ENCODE measurements at regions of chr4 and their contacts with region 1.

Region 1: DNA sequence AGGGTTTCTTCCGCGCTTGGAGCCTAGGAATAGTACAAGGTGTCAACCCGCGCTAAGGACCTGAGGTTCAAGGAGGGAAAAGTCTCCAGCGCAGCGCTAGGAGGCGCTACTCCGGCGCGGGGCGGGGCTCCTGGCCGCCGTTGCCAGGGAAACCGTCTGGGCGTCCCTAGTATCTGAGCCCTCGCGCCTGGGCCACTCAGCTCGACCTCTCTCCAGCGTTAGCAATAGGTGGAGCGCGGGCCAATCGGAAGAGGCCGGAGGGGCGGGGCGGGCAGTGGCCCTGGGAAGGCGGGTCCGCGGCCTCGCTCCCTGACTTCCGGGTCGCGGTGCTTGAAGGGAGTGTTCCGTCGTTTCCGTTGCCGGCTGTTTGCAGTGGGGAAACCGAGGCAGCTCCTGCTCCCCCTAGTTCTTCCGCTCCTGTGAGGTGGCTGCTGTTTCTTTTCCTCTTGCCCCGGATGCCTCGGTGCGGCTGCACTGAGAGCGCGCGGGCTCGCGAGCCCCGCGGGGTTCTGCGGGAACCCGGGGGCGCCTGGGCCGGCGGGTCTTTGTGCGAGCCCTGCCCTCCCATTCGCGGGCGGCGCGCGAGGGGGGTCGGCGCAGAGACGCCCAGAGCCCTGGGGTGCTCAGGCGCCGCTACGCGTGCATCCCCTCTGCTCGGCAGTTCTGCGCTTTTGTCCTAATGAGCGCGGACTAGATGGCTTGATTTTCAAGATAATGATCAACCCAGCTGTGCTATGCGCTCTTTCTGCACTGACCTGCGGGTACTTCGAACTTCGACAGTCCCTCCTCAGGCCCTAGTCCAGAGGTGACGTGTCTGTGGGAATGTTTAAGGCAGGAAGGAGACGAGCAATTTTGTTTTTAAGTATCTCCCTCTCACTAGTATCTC is at the start of gene ELMOD2:
- DNase-seq: peak; percentile 97
- H3K4me3 Mint-ChIP-seq: peak within 1 kb of the TSS; percentile 85
- H3K27ac Mint-ChIP-seq: peak within 1 kb of the TSS; percentile 49
- H3K4me1 Mint-ChIP-seq: peaks cover 11% of the 10 kb centered on the region
- H3K27me3 Mint-ChIP-seq: peaks cover 6% of the 10 kb centered on the region
- total RNA-seq, gene ELMOD2: 15.3 and 16.0 TPM in 2 replicates

Region 2: GRCh38 chr4:139083956-139084803 is 1439.9 kb before region 1 on chr4:
- intact Hi-C with region 1: loop called (anchors 10 kb)
- DNase-seq: peak; percentile 81
- H3K4me3 Mint-ChIP-seq: peak overlapping the region; percentile 99
- H3K27ac Mint-ChIP-seq: peak overlapping the region; percentile 99
- H3K4me1 Mint-ChIP-seq: peaks cover 30% of the 10 kb centered on the region
- H3K27me3 Mint-ChIP-seq: no peaks in the 10 kb centered on the region

Region 3: DNA sequence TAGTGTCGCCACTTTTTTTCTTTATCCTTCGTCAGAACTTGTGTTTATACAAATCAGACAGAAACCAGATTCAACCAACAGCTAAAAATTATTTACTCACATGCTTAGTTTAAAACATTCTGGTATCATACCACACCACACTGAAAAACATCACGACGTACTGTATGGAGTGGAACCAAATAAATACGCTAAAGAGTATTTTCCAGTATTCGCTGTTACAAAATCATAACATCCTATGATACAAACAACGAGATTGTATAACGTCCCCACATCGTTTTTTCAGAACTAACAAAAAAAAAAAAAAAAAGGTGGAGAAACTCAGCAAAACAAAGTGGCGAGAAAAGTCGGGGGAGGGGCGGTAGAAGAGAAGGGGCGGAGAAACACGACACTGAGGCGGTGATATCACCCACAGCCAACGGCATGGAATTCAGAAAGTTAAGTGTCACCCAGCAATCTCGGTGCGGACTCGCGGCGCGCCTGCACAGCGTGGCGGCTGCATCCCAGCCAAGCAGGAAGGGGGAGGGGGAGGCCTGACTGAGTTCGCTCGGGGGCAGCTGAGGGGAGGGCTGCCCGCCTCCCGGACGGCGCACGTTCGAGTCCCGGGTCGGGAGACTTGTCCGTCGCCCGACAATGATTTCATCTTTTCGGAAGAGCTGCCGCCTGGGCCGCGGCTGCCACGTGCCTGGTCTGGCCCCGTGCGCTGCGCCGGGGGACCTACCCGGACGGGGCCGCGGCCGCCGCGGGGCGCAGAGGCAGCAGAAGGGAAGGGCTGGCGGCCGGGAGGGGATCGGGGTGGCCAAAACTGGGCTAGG is 969.0 kb before region 1 on chr4:
- intact Hi-C with region 1: loop called (anchors 5 kb)
- DNase-seq: peak; percentile 82
- H3K4me3 Mint-ChIP-seq: peak overlapping the region; percentile 97
- H3K27ac Mint-ChIP-seq: peak overlapping the region; percentile 98
- H3K4me1 Mint-ChIP-seq: peaks cover 47% of the 10 kb centered on the region
- H3K27me3 Mint-ChIP-seq: peaks cover 4% of the 10 kb centered on the region

Region 4: DNA sequence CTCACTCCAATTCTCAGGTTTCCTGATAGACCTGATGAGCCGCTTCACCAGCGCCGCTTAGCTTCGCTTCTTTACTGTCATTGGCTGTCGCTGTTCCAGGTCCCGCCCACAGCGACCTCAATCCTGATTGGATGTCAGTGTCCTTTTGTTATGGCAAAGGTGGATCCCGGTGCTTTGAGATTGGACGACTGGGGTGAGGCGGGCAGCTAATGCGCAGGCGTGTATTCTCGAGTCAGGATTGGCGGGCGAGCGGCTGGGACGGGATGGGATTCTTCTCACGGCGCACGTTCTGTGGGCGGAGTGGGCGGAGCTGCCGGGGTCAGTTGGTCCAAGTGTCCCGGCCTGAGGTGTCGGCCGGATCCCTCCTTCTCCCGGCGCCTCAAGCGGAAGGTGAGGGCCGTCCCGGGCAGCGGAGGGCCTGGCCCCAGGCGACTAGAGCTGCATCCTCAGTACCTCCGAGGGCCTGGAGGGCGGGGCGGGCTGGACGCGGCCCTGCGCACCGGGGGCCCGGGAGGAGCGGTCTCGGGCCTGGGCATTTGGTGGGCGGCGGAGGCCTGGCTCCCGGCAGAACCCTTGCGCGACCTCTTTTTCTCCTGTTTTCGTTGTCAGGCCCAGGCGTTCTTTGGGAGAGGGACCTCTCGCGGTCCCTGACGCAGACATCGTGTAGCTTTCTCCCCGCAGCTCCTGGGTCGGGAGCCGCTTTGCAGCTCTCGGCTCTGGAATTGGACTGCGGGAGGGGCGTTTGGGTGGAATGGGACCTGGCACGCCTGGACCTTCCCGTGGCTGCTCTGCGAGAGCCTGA is 150.6 kb before region 1 on chr4 and contains the start of gene SCOC:
- intact Hi-C with region 1: loop called (anchors 1 kb)
- DNase-seq: peak; percentile 97
- H3K4me3 Mint-ChIP-seq: no peak within 1 kb of the TSS
- H3K27ac Mint-ChIP-seq: no peak within 1 kb of the TSS
- H3K4me1 Mint-ChIP-seq: peaks cover 28% of the 10 kb centered on the region
- H3K27me3 Mint-ChIP-seq: peaks cover 10% of the 10 kb centered on the region
- total RNA-seq, gene SCOC: 36.7 and 38.0 TPM in 2 replicates

Region 5: DNA sequence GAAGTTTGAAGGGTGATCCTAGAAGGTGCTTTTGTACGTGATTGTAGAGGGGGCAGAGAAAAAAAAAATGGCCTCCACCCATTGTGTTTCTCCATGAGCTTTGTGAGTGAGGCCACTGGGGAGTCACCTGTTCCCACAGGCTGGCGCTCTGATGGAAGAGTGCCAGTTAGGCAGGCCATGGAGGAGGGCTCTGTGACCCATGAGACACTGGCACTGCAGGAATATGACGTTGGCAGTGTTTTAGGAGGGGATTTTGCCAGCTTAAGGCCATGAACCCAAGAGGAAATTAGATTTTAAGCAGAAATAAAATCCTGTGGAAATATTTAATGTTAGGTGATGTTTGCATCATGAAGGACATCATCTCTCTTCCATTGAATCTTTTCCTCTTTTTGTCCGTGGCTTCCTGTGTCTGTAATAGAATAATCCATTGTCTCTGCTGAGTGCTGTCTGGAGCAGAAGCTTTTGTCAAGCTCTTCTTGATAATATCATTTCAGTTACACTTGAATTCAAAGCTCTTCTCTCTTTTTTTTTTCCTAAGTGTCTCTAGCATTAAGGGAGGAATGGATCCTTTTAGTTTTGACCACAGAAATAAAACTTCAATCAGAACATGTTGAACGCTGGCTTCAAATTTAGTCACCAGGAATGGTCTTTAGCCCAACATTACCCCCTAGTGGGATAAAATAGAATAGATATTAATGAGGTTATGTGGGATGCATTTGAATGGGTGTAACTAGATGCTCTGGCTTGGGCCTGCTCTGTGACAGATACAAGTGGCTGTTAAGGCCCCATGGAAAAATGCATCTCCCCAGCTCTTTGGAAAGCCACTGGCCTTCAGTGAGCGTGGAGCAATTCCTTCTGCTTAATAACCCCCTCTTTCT is 85.7 kb after region 1 on chr4:
- intact Hi-C with region 1: loop called (anchors 1 kb)
- DNase-seq: no peak
- H3K4me3 Mint-ChIP-seq: no peak overlapping the region
- H3K27ac Mint-ChIP-seq: no peak overlapping the region
- H3K4me1 Mint-ChIP-seq: no peaks in the 10 kb centered on the region
- H3K27me3 Mint-ChIP-seq: peaks cover 10% of the 10 kb centered on the region

Region 6: DNA sequence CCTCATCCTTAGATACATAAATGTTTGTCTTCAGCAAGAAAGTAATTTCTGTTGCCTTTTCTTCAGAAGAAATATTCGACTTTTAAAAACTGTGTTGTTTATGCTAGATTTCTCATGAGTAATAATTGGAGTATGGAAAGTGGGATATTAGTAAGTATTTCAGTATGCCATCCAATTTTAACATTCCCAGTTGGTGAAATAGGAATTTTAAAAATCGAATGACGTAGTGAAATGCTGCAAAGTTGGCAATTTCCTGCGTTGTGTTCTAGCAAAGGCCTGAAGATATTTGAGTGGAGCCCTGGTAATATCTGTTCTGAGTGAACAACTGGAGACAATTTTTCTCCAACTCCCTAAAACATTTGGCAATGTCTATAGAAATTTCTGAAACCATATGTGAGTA is 886.7 kb after region 1 on chr4:
- intact Hi-C with region 1: no loop called
- DNase-seq: no peak
- H3K4me3 Mint-ChIP-seq: no peak overlapping the region
- H3K27ac Mint-ChIP-seq: no peak overlapping the region
- H3K4me1 Mint-ChIP-seq: no peaks in the 10 kb centered on the region
- H3K27me3 Mint-ChIP-seq: no peaks in the 10 kb centered on the region

Measured in activated T-helper 2 cell treated with anti-CD3 and anti-CD28 coated beads, Interferon-gamma antibody, Interleukin-2, Interleukin-4, amounts not matched to agents 10 μg/mL and 5 μg/mL and 100 μg/mL, durations not matched to agents 14 hours and 24 hours and 36 hours (primary cell).